ENCODE measurements at regions of chr9 and their contacts with region 1.

Region 1: DNA sequence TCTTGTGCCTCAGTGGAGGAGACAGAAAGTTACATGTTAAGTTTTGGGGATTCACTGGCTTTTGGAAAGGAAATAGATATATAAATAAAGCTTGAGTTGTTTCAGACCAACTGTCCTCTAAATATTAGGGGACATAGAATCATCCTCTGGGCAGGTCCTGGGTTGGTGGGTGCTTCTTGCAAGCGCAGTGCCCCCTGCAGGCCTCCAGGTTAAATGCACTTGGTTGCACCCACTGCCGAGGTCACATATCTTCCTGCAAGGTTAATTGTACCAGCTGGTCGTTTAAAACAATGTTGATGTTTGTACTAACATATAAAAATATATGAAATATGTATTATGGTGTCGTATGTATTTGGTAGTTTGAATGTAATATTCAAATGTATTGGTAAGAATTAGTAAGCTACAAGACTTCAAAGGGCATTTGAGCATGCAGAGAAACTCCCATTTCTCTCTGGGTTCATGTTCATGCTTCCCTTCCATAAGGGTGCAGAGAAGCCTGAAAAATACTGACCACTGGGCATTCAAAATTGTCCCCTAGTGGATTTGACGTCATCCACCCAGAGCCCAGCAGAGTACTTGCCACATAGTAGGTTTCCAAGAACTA is 87.0 kb downstream of the ZNF618 start:
- DNase-seq: peak; percentile 64
- H3K4me3 ChIP-seq: no peak overlapping the region
- H3K27ac ChIP-seq: no peak overlapping the region
- H3K4me1 ChIP-seq: peaks cover 18% of the 10 kb centered on the region
- H3K27me3 ChIP-seq: no peaks in the 10 kb centered on the region
- CTCF ChIP-seq: peak; percentile 78 to 86
- POLR2A ChIP-seq: no peak

Region 2: DNA sequence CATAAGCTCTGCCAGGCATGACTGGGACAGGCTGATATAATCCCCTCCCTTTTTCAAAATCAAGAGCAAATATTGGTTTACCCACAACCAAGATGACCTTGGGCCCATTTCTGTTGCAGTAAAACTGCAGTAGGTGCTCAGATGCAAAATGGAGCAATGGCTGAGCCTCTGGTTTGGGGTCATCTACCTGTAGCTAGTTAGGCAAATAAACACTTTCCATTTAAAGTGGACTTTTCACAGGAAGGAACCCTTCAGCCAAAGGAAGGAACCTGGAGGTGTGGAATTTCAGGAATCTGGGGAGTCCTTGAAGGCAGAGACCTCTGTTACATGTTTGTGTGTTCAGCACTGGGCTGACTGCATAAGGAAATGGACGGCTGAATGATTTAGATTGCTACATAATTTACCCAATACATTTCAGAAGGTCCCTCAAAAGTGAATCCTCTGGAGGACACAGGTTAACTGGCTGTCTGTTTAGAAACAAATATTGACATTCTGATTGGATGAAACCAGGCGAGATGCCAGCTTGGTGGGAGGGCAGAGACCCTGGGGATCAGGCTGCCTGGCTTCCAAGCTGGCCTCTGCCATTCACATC is 257.1 kb before region 1 on chr9:
- CTCF ChIA-PET with region 1: no interaction called
- POLR2A ChIA-PET with region 1: no interaction called
- dilution Hi-C with region 1: no loop called
- intact Hi-C with region 1: no loop called
- DNase-seq: peak; percentile 33
- H3K4me3 ChIP-seq: no peak overlapping the region
- H3K27ac ChIP-seq: no peak overlapping the region
- H3K4me1 ChIP-seq: peaks cover 5% of the 10 kb centered on the region
- H3K27me3 ChIP-seq: peaks cover 6 to 14% of the 10 kb centered on the region in 2 experiments
- CTCF ChIP-seq: no peak
- POLR2A ChIP-seq: no peak

Region 3: DNA sequence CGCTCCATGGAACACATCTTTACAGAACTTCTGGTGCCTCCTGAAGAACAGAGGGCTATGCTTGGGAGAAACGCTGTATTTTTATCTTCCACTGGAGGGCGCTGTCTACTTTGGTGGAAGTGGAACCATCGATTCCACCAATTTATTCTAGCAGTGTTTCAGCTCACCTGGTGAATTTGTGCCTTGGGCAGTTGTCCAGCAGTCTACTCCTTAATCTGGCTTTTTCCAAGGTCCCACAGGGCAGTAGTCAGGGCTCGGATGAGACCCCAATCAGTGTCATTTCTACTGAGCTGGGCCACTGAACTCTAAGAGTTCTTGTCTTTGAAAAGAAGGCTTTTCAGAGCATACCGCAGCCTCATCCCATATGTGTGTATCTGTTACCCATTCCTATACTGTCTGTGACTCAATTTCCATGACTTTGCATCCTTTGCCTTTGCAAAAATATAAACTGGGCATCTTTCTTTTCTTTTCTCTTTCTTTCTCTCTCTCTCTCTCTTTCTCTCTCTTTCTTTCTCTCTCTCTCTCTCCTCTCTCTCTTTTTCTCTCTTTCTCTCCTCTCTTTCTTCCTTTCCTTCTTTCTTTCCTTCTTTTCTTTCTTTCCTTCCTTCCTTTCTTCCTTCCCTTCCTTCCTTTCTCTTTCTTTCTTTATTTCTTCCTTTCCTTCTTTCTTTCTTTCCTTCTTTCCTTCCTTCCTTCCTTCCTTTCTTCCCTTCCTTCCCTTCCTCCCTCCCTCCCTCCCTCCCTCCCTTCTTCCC is 225.4 kb before region 1 on chr9:
- CTCF ChIA-PET with region 1: interaction called, 23 read pairs
- POLR2A ChIA-PET with region 1: no interaction called
- dilution Hi-C with region 1: no loop called
- intact Hi-C with region 1: loop called (anchors 1 kb)
- DNase-seq: peak; percentile 69
- H3K4me3 ChIP-seq: no peak overlapping the region
- H3K27ac ChIP-seq: no peak overlapping the region
- H3K4me1 ChIP-seq: no peaks in the 10 kb centered on the region
- H3K27me3 ChIP-seq: peaks cover 6 to 13% of the 10 kb centered on the region in 2 experiments
- CTCF ChIP-seq: peak; percentile 72 to 78
- POLR2A ChIP-seq: no peak

Region 4: GRCh38 chr9:113807173-113808061 is 155.7 kb before region 1 on chr9:
- CTCF ChIA-PET with region 1: interaction called, 26 read pairs
- POLR2A ChIA-PET with region 1: no interaction called
- dilution Hi-C with region 1: no loop called
- intact Hi-C with region 1: loop called (anchors 1 kb)
- DNase-seq: peak; percentile 73
- H3K4me3 ChIP-seq: peak overlapping the region in 1 of 3 experiments; percentile 25
- H3K27ac ChIP-seq: no peak overlapping the region
- H3K4me1 ChIP-seq: no peaks in the 10 kb centered on the region
- H3K27me3 ChIP-seq: no peaks in the 10 kb centered on the region
- CTCF ChIP-seq: peak; percentile 84 to 87
- POLR2A ChIP-seq: no peak

Region 5: GRCh38 chr9:113828221-113828620 is 134.9 kb before region 1 on chr9:
- CTCF ChIA-PET with region 1: no interaction called
- POLR2A ChIA-PET with region 1: no interaction called
- dilution Hi-C with region 1: no loop called
- intact Hi-C with region 1: no loop called
- DNase-seq: peak; percentile 53
- H3K4me3 ChIP-seq: peak overlapping the region in 1 of 3 experiments; percentile 44
- H3K27ac ChIP-seq: peak overlapping the region; percentile 15
- H3K4me1 ChIP-seq: peaks cover 8% of the 10 kb centered on the region
- H3K27me3 ChIP-seq: no peaks in the 10 kb centered on the region
- CTCF ChIP-seq: no peak
- POLR2A ChIP-seq: no peak

Region 6: GRCh38 chr9:113853324-113853723 is 109.8 kb before region 1 on chr9:
- CTCF ChIA-PET with region 1: interaction called, 3 read pairs
- POLR2A ChIA-PET with region 1: no interaction called
- dilution Hi-C with region 1: no loop called
- intact Hi-C with region 1: loop called (anchors 1 kb)
- DNase-seq: peak; percentile 8
- H3K4me3 ChIP-seq: no peak overlapping the region
- H3K27ac ChIP-seq: no peak overlapping the region
- H3K4me1 ChIP-seq: no peaks in the 10 kb centered on the region
- H3K27me3 ChIP-seq: no peaks in the 10 kb centered on the region
- CTCF ChIP-seq: peak; percentile 31 to 33
- POLR2A ChIP-seq: no peak

Region 7: DNA sequence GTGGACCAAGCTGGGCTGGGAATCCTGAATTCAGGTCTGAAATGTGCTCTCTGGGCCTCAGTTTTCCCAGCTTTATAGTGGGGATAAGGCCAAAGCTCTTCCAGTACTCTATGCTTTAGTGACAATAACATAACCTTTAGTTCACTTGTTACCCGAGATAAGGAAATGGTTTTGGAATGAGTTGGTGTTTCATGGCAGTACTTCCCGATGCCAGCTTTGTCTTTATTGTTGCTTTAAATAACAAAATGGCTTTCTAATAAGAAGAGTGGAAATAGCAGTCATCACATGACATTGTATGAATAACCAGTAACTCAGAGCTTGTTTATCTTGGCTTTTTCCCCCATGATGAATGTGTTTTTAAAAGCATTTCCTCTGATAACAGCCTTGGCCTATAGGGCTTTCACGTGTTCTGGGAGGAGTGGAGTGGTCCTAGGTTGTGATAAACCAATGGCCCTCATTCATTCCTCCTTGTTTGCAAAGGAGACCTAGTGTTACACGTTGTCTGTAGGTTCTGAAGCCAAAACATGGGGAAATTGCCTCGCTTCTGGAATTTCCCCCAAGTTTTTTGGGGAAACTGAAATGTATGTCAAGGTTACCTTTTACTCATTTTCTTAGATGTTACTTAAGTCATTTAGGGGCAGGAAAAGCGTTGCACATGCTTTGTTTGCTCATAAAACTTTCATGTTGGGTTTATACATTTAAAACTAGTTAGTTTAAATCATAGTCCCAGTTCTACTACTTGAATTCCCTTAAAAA is 33.3 kb before region 1 on chr9:
- CTCF ChIA-PET with region 1: interaction called, 21 read pairs
- POLR2A ChIA-PET with region 1: no interaction called
- dilution Hi-C with region 1: no loop called
- intact Hi-C with region 1: no loop called
- DNase-seq: peak; percentile 98
- H3K4me3 ChIP-seq: no peak overlapping the region
- H3K27ac ChIP-seq: peak overlapping the region; percentile 70
- H3K4me1 ChIP-seq: peaks cover 30% of the 10 kb centered on the region
- H3K27me3 ChIP-seq: no peaks in the 10 kb centered on the region
- CTCF ChIP-seq: no peak
- POLR2A ChIP-seq: peak; percentile 18

Region 8: DNA sequence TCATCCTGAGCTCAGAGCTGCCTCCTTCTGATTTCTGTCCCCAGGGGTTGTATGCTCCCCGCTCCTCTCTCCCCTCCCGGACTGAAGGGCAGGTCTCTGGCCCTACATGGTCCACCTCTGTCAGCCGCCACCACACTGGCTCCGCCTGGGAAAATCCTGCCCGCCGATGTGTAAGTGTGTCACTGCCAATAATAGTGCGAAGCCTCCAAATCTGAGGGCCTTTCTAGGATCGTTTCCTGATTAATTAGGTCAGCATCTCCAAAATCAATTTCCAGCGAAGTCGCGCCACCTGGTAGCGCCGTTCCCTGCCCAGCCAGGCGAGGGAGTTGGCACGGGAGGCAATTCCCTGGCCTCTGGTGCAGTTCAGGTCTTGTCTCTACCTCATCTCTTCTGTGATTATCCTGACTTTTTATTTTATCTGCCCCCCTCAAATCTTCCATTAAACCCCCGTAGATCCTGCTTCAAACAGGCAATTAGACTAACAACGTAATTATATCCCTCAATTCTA is 13.5 kb before region 1 on chr9:
- CTCF ChIA-PET with region 1: interaction called, 12 read pairs
- POLR2A ChIA-PET with region 1: no interaction called
- dilution Hi-C with region 1: no loop called
- intact Hi-C with region 1: no loop called
- DNase-seq: no peak
- H3K4me3 ChIP-seq: no peak overlapping the region
- H3K27ac ChIP-seq: no peak overlapping the region
- H3K4me1 ChIP-seq: peaks cover 29% of the 10 kb centered on the region
- H3K27me3 ChIP-seq: no peaks in the 10 kb centered on the region
- CTCF ChIP-seq: no peak
- POLR2A ChIP-seq: no peak

Region 9: DNA sequence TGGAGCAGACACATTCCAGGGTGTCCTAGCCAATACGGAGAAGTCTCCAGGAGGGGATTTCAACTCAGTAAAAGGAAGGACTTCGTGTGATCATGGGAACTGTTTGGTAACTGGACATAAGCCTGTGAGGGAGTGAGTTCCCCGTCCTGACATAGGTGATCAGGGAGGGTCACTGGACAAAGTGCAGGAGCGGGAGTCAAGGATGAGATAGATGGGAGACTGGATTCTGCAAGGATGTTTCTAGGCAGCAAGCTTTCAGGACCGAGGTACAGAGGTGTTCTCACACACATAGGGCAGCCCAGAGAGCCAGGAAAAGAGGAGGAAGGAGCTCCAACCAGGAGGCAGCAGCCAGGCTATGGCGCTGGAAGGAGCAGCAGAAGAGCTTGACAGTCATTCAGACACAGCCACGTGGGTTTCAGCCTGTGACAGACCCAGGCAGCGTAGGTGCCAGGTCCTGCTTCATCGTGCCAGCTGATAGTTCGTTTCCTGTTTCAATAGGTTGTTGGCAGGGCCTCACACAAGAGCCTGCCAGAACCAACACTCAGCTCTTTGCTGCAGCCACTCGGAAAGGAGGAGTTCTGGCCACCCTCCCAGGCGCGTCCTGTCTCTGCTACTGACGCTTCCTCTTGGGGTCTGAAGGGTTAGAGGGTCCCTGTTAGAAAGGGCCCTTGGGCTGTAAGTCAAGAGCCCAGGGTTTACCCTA is 30.9 kb after region 1 on chr9:
- CTCF ChIA-PET with region 1: interaction called, 13 read pairs
- POLR2A ChIA-PET with region 1: no interaction called
- dilution Hi-C with region 1: no loop called
- intact Hi-C with region 1: no loop called
- DNase-seq: peak; percentile 95
- H3K4me3 ChIP-seq: no peak overlapping the region
- H3K27ac ChIP-seq: peak overlapping the region; percentile 40
- H3K4me1 ChIP-seq: peaks cover 42% of the 10 kb centered on the region
- H3K27me3 ChIP-seq: no peaks in the 10 kb centered on the region
- CTCF ChIP-seq: no peak
- POLR2A ChIP-seq: no peak

Region 10: DNA sequence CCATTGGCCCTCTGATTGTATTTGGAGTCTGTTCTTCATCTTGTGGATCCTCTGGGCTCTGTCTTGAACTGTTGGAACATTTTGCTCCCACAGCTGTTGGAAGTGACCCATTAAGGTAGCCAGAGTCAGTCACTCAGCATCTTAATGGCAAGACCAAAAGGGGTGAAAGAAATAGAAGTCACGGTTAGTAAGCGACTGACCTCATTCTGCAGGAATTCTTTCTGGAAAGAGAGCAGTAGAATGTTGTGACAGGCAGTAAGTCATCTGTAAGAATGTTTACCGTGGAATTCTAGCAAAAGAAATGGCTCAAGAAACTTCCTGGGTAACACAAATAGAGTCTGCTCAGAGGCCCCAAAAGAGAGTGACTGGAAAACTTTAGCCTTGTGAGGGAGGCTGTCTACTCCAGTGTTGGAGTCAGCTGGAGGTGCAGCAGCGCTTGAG is 1183.5 kb after region 1 on chr9:
- CTCF ChIA-PET with region 1: no interaction called
- POLR2A ChIA-PET with region 1: no interaction called
- dilution Hi-C with region 1: no loop called
- intact Hi-C with region 1: no loop called
- DNase-seq: no peak
- H3K4me3 ChIP-seq: no peak overlapping the region
- H3K27ac ChIP-seq: no peak overlapping the region
- H3K4me1 ChIP-seq: no peaks in the 10 kb centered on the region
- H3K27me3 ChIP-seq: no peaks in the 10 kb centered on the region
- CTCF ChIP-seq: no peak
- POLR2A ChIP-seq: no peak

Measured in endothelial cell of umbilical vein (primary cell).